Cardiac septum (tissue), 1 donor: ENCODE measurements at regions of chr20 and their contacts with region 1.

Region 1: GRCh38 chr20:11108102-11108810 is 434.5 kb upstream of the JAG1 start:
- DNase-seq: peak; percentile 75

Region 2: GRCh38 chr20:10781526-10781925 is 326.7 kb before region 1 on chr20:
- intact Hi-C with region 1: no loop called
- DNase-seq: no peak

Region 3: DNA sequence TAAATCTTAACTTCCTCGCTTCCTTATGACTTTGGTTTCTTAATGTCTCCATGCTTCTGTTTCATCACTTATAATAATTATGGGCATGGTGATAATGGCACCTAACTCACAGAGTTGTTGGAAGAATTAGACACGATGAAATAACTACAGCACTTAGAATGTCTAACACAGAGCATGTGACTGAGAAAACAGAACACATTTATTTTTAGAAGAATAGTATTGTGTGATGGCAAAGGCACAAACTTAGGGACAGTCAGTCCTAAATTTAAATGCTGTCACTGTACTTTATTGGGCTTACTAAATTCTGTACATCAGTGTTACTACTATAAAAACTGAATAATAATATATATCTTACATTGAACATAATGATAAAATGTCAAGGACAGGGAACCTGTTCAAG is 43.3 kb before region 1 on chr20:
- intact Hi-C with region 1: loop called (anchors 2 kb)
- DNase-seq: no peak

Region 4: GRCh38 chr20:11144114-11144950 is 36.1 kb after region 1 on chr20:
- intact Hi-C with region 1: no loop called
- DNase-seq: no peak

Region 5: DNA sequence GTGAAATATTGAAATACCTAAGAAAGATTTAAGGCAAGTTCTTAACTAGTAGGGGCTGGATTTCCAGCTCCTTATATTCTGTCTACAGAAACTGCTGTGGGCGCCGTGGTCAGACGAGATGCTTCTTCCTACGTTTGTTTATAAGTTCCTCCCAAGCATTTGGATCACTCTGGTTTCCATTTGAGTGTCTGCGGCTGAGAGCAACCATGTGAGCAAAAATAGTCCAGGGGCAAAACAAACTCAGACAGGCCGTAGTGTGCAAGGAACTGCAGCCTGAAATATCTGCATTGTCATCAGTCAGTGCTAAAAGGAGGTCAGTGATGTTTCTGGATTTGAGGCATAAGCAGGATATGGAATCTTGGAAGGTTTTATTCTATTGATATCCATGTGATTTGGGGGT is 51.5 kb after region 1 on chr20:
- intact Hi-C with region 1: loop called (anchors 5 kb)
- DNase-seq: no peak

Region 6: GRCh38 chr20:11204926-11205768 is 96.9 kb after region 1 on chr20:
- intact Hi-C with region 1: loop called (anchors 10 kb)
- DNase-seq: no peak

Region 7: DNA sequence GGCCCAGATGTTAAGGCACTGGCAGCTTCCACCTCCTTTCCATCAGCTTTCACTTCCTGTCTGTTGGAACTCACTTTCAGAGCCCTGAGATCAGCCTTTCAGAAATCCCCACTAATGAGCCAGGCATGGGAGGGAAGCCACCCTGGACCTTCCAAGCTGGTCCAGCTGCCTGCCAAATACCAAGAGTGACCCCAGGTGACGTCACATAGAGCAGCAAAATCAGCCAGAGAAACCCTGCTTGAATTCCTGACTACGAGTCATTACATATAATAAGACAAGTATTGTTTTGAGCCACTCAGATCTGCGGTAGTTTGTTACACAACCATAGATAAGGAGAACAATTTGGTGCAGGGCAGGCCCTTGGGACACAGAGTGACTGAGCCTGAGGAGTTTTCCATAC is 121.5 kb after region 1 on chr20:
- intact Hi-C with region 1: no loop called
- DNase-seq: no peak